Motor neuron (in vitro differentiated cells): ENCODE measurements at regions of chr19 and their contacts with region 1.

Region 1: DNA sequence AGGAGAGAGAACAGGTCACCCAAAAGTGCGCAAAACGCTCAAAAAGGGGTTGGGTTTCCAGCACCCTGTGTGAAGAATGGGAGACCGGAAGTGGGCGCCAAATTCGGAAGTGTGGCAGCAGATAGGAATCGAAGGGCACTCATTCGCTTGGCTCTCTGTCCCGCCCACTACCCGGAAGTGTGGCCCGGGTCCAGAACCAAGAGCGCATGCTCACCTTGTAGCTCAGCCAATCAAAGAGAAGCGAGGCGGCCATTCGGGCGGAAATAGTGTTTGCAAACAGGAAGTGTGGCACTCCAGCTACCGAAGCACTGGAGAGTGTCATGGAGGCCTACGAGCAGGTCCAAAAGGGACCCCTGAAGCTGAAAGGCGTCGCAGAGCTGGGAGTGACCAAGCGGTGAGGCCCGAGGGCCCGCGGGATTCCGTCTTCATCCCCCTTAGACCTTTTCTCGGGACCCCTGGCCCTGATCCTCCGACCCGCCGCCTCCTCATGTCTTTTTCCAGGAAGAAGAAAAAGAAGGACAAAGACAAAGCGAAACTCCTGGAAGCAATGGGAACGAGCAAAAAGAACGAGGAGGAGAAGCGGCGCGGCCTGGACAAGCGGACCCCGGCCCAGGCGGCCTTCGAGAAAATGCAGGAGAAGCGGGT is at the start of gene FAM32A:
- ATAC-seq: peak; percentile 84 to 98 (median 96)
- H3K4me3 ChIP-seq: peak within 1 kb of the TSS; percentile 70 to 93 (median 88)
- H3K27ac ChIP-seq: peak within 1 kb of the TSS; percentile 84 to 88
- H3K4me1 ChIP-seq: peaks cover 6 to 7% of the 10 kb centered on the region in 2 donors
- total RNA-seq, gene FAM32A: 78.1 to 159 (median 114) TPM

Region 2: GRCh38 chr19:15418588-15419412 is 766.4 kb before region 1 on chr19 and contains the start of gene AKAP8L:
- in situ Hi-C with region 1: loop called in 1 of 9 experiments (anchors 25 kb)
- ATAC-seq: peak; percentile 90 to 96 (median 95)
- H3K4me3 ChIP-seq: peak within 1 kb of the TSS; percentile 79 to 99 (median 91)
- H3K27ac ChIP-seq: peak within 1 kb of the TSS; percentile 94 to 95
- H3K4me1 ChIP-seq: peaks cover 14 to 16% of the 10 kb centered on the region in 2 donors
- total RNA-seq, gene AKAP8L: 71.1 to 147 (median 108) TPM

Region 3: DNA sequence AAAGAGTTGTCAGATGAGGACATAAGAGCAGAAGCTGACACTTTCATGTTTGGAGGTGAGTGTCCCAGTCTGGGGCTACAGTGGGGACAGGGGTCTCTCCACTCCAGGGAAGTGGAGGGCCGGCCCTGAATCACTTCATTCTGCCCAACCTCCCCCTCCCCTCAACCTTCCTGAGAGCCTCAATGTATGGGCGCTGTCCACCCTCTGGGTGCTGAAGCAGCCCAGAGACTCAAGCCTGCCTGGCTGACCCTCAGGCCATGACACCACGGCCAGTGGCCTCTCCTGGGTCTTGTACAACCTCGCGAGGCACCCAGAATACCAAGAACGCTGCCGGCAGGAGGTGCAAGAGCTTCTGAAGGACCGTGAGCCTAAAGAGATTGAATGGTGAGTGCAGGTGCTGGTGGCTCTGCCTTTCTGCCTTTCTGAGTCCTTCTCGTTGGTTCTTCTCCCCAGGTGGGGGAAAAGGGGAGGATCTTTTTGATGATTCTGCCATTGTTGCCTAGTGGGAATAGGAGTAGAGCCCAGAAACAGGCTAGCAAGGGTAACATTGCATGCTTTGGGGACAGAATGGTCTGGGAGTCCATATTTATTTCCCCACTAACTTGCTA is 561.4 kb before region 1 on chr19:
- in situ Hi-C with region 1: loop called in 2 of 9 experiments (anchors 25 kb)
- ATAC-seq: peak in 2 of 8 experiments; percentile 26 to 29
- H3K4me3 ChIP-seq: no peak overlapping the region
- H3K27ac ChIP-seq: no peak overlapping the region
- H3K4me1 ChIP-seq: no peaks in the 10 kb centered on the region

Region 4: GRCh38 chr19:15629003-15629880 is 556.0 kb before region 1 on chr19:
- in situ Hi-C with region 1: loop called in 2 of 9 experiments (anchors 25 kb)
- ATAC-seq: peak in 3 of 8 experiments; percentile 92 to 98 (median 95)
- H3K4me3 ChIP-seq: no peak overlapping the region
- H3K27ac ChIP-seq: no peak overlapping the region
- H3K4me1 ChIP-seq: no peaks in the 10 kb centered on the region

Region 5: DNA sequence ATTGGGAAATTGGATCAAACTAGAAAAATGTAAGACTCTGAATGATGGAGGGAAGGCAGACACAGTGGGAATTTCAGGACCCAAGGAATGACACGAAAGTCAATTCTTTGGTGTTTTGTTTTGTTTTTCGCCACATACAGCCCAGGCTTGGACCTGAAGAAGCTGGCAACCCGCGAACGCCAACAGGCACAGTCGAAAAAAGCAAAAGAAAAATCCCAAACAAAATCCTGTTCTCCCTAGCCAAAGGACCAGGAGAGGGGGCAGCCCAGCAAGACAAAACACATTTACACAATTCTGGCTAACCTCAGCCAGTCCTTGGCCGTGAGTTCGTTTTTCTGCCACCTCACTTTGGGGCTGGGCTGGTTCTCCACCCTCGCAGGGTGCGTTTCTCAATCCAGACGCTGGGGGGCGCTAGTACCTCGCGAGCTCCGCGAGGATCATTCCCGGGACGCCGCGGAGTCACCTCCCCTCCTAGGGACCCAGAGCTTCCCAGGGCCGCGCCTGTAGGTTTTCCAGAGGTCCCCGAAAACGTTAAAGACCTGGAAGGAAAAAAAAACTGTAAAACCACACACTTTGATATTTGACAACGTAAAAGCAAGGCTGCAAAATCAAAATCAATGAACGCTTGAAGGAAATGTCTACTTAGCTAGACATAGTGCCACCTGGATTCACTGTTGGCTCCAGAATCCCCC is 143.8 kb before region 1 on chr19:
- in situ Hi-C with region 1: loop called in 8 of 9 experiments (anchors 10 to 25 kb)
- ATAC-seq: peak; percentile 71 to 99 (median 98)
- H3K4me3 ChIP-seq: no peak overlapping the region
- H3K27ac ChIP-seq: no peak overlapping the region
- H3K4me1 ChIP-seq: no peaks in the 10 kb centered on the region